ENCODE measurements at regions of chr13 and their contacts with region 1.

Region 1: GRCh38 chr13:102580552-102581169 is 16.1 kb upstream of the TPP2 start:
- DNase-seq: peak; percentile 50
- H3K4me3 ChIP-seq: no peak overlapping the region
- H3K27ac ChIP-seq: no peak overlapping the region
- H3K27me3 ChIP-seq: peaks cover 9% of the 10 kb centered on the region
- CTCF ChIP-seq: peak; percentile 80

Region 2: DNA sequence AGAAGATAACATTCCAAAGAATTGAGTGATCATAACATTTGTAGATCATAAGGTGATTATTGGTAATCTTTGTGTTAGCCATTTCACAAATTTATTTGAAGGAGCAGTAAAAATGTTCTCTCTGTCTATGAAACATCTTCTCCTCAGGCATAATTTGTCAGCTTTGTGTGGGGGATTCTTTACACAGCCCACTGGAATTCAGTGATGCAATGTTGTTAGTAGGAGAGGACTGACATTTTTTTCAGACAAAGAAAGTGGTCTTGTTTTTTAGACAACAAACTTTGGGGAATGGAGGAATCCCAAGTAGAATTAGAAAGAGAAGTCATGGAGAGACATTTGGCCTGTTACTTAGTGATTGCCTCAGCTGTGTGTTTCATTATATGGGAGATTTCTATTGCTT is 1027.9 kb before region 1 on chr13:
- CTCF ChIA-PET with region 1: interaction called, 14 read pairs
- POLR2A ChIA-PET with region 1: no interaction called
- DNase-seq: no peak
- H3K4me3 ChIP-seq: no peak overlapping the region
- H3K27ac ChIP-seq: no peak overlapping the region
- H3K27me3 ChIP-seq: no peaks in the 10 kb centered on the region
- CTCF ChIP-seq: no peak

Region 3: DNA sequence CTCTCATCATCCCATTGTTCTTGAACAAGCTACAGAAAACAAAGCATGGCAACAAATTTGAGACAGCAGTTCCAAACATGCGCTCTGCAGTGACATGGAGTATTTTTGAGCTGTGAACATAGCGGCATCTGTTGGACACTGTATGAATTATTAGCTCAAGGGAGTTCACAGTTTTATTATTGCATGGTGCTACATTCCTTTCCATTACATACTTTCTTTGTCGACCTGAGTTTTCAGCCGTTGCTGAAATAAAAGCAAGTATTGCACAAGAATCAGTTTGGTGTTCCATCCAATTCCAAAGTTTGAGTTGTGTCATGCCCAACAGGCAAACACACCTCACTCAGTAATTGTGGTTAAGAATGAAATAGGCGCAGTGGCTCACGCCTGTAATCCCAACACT is 144.3 kb after region 1 on chr13:
- CTCF ChIA-PET with region 1: interaction called, 17 read pairs
- POLR2A ChIA-PET with region 1: no interaction called
- DNase-seq: no peak
- H3K4me3 ChIP-seq: no peak overlapping the region
- H3K27ac ChIP-seq: no peak overlapping the region
- H3K27me3 ChIP-seq: peaks cover 3% of the 10 kb centered on the region
- CTCF ChIP-seq: peak; percentile 36; the same call in 1 of the 2 replicates

Region 4: GRCh38 chr13:102773441-102774215 is 193.0 kb after region 1 on chr13 and contains the start of gene TEX30:
- CTCF ChIA-PET with region 1: interaction called, 11 read pairs
- POLR2A ChIA-PET with region 1: no interaction called
- DNase-seq: peak; percentile 37
- H3K4me3 ChIP-seq: peak within 1 kb of the TSS; percentile 83
- H3K27ac ChIP-seq: peak within 1 kb of the TSS; percentile 75
- H3K27me3 ChIP-seq: no peaks in the 10 kb centered on the region
- CTCF ChIP-seq: no peak; the same call in 1 of the 2 replicates
- polyA plus RNA-seq, gene TEX30: 9.0 and 13.0 TPM in 2 replicates

Region 5: GRCh38 chr13:102784501-102784900 is 203.8 kb after region 1 on chr13:
- CTCF ChIA-PET with region 1: no interaction called
- POLR2A ChIA-PET with region 1: no interaction called
- DNase-seq: no peak
- H3K4me3 ChIP-seq: no peak overlapping the region
- H3K27ac ChIP-seq: no peak overlapping the region
- H3K27me3 ChIP-seq: no peaks in the 10 kb centered on the region
- CTCF ChIP-seq: no peak

Region 6: GRCh38 chr13:102845630-102846260 is 265.1 kb after region 1 on chr13 and contains the start of gene ERCC5:
- CTCF ChIA-PET with region 1: interaction called, 31 read pairs
- POLR2A ChIA-PET with region 1: no interaction called
- DNase-seq: peak; percentile 79
- H3K4me3 ChIP-seq: peak within 1 kb of the TSS; percentile 95
- H3K27ac ChIP-seq: peak within 1 kb of the TSS; percentile 92
- H3K27me3 ChIP-seq: no peaks in the 10 kb centered on the region
- CTCF ChIP-seq: no peak
- polyA plus RNA-seq, gene ERCC5: 39.2 and 47.6 TPM in 2 replicates

Region 7: DNA sequence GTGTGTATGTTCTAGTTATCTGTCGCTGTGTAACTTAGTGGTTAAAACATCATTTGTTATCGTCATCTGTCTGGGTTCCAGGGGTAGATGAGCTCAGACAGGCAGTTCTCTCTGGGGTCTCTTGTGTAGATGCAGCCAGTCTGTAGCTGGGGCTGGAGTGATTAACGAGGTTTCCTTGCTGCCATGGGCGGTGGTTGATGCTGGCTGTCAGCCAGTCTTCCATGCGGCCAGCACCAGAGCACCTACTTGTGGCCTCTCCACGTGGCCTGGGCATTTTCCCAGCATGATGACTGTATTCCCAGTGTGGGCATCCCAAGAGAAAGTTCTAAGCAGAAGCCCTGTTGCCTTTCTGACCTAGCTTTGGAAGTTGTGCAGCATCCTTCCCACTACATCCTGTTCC is 275.9 kb after region 1 on chr13:
- CTCF ChIA-PET with region 1: no interaction called
- POLR2A ChIA-PET with region 1: no interaction called
- DNase-seq: no peak
- H3K4me3 ChIP-seq: no peak overlapping the region
- H3K27ac ChIP-seq: no peak overlapping the region
- H3K27me3 ChIP-seq: no peaks in the 10 kb centered on the region
- CTCF ChIP-seq: no peak